Calu3 (cell line): ENCODE measurements at regions of chr11 and their contacts with region 1.

Region 1: DNA sequence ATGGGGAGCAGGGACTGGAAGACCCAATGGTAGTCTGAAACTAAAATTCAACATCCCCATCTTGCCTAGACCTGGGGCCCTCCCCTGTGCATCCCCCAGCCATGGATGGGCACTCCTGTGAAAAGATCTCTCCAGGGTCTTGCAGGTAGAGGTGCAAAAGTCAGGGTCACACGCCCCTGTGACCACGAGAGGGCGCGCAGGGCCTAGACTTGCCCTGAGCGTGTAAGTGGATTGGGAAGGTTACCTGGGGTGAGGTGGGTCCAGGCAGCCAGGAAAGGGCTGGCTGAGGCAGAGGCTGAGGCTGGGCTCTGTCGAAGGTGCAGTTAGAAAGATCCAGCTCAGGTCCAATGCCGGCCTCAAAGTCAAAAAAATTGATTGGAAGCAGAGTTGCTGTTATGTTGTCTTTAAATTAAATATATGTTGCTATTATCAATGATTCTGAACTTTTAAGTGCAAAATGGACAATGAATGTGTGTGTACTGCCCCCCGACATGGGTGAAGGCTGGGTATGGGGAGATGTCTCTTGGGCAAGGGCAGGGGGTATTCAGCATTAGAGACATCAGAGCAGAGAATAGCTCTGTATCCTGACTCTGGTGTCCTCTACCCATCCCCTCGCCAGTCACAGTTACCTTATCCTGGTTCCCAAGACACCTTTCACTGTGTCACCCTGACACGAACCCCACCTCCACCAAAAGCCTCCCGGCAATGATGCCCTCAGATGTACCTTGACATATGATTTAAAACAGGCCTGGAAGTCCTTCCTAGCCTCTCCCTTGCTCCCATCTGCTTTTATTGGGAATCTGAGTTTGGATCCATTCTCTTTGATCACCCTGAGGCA is 4.7 kb upstream of the POU2F3 start:
- DNase-seq: peak; percentile 76
- H3K4me3 Mint-ChIP-seq: no peak overlapping the region
- H3K27ac Mint-ChIP-seq: no peak overlapping the region
- H3K4me1 Mint-ChIP-seq: no peaks in the 10 kb centered on the region
- H3K27me3 Mint-ChIP-seq: peaks cover 71% of the 10 kb centered on the region
- CTCF ChIP-seq: peak; percentile 71

Region 2: GRCh38 chr11:119891055-119891768 is 344.0 kb before region 1 on chr11:
- CTCF ChIA-PET with region 1: no interaction called
- intact Hi-C with region 1: no loop called
- DNase-seq: no peak
- H3K4me3 Mint-ChIP-seq: no peak overlapping the region
- H3K27ac Mint-ChIP-seq: no peak overlapping the region
- H3K4me1 Mint-ChIP-seq: no peaks in the 10 kb centered on the region
- H3K27me3 Mint-ChIP-seq: peaks cover 30% of the 10 kb centered on the region
- CTCF ChIP-seq: no peak

Region 3: DNA sequence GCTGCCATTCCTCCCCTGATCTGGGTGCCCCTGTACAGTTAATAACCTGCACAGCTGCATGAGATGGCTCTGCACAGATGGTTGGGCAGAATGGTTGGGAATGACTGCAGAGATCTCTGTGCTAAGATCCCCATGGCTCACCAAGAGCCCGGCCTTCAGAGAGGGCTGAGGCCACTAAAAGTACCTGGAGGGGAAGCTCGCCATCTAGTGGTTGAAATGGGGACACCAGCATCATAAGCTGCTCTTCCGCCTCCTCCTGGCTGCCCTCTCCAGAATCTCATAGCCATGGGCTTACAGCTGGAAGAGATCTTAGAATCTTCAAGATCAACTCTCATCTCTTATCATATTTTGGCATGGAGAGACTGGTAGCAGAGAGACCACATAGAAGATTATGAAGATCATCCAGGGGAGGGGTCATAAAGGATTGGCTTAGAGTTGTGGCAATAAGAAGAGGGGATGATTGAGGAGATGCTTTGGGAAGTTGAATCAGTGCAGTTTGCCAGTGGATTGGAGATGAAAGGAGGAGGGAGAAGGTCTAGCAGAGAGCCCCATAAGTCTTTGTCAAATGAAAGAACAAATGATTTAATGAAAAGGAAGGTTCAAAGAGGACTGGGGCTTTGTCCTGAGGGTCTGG is 67.9 kb after region 1 on chr11:
- CTCF ChIA-PET with region 1: interaction called, 12 read pairs
- intact Hi-C with region 1: loop called (anchors 1 kb)
- DNase-seq: peak; percentile 59
- H3K4me3 Mint-ChIP-seq: no peak overlapping the region
- H3K27ac Mint-ChIP-seq: peak overlapping the region; percentile 86
- H3K4me1 Mint-ChIP-seq: peaks cover 54% of the 10 kb centered on the region
- H3K27me3 Mint-ChIP-seq: no peaks in the 10 kb centered on the region
- CTCF ChIP-seq: peak; percentile 72

Region 4: DNA sequence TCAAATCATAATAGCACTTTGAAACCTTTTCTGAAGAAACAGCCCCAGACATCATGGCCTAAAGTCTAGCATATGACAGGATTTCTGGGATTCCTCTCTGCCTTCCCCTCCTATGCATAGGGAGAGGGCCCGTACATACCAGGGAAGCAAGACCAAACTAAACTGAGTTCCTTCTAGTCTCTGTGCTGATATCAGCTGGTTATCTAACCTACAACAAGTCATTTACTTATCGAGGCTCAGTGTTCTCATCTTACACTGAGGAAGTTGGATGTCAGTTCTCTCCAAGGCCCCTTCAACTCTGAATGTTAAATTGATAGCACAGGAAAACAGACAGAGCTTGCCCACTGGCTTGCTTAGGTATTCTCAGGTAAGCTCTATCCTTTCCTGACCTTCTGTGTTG is 259.4 kb after region 1 on chr11:
- CTCF ChIA-PET with region 1: no interaction called
- intact Hi-C with region 1: loop called (anchors 10 kb)
- DNase-seq: no peak
- H3K4me3 Mint-ChIP-seq: no peak overlapping the region
- H3K27ac Mint-ChIP-seq: no peak overlapping the region
- H3K4me1 Mint-ChIP-seq: peaks cover 8% of the 10 kb centered on the region
- H3K27me3 Mint-ChIP-seq: peaks cover 11% of the 10 kb centered on the region
- CTCF ChIP-seq: no peak